Heart right ventricle (tissue), 16 donors: ENCODE measurements at regions of chr7 and their contacts with region 1.

Region 1: DNA sequence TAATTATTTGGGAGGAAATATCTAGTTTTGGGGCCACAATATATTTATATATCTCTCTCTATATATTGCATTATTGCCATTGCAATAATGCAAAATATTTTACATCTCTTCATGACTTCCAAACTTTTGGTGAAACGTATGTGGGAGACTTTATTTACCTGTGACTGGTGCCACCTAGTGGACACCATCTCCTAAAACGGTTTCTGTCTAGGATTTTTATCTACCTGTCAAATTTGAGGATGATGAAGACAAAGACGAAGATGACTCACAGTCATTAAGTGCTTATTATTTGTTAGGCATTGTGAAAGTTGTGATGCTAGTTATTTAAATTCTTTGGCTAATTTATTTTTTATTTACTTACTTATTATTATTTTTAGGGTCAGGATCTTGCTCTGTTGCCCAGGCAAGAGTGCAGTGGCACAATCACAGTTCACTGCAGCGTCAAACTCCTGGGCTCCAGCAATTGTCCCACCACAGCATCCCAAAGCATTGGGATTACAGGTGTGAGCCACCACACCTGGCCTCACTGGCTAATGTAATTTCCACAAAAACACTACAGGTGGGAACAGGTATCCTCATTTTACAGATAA is 18.7 kb upstream of the CBLL1 start:
- DNase-seq: peak in 1 of 2 donors; percentile 42
- ATAC-seq: no peak
- H3K4me3 ChIP-seq: no peak overlapping the region
- H3K27ac ChIP-seq: no peak overlapping the region
- H3K4me1 ChIP-seq: no peaks in the 10 kb centered on the region
- H3K27me3 ChIP-seq: peaks cover 0 to 9% (median 0%) of the 10 kb centered on the region in 7 donors
- CTCF ChIP-seq: peak; percentile 57 to 83 (median 74)

Region 2: DNA sequence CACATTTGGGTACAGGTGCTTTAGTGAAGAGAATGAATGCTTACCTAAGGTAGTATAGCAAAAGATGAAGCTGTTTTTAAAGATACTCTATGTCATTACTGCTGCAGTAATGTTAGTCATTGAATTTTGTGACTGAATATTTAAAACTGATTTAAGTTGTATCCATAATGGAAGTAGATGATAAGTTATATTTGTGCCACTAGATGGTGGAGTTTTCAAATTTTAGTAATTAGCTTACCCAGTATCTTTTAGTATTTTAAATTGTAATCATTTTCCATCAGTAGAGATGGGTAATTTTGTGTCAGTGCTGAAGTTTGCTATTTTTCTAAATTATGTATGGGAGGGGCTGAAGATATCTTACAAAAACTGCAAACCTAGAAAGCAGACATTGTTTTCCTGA is 531.2 kb before region 1 on chr7:
- intact Hi-C with region 1: loop called in 2 of 10 experiments (anchors 5 to 10 kb)
- DNase-seq: no peak
- ATAC-seq: no peak
- H3K4me3 ChIP-seq: no peak overlapping the region
- H3K27ac ChIP-seq: peak overlapping the region in 4 of 10 donors; percentile 11 to 42 (median 14)
- H3K4me1 ChIP-seq: peaks cover 0 to 16% (median 9%) of the 10 kb centered on the region in 9 donors
- H3K27me3 ChIP-seq: no peaks in the 10 kb centered on the region
- CTCF ChIP-seq: peak in 4 of 9 donors; percentile 15 to 20 (median 19)

Region 3: DNA sequence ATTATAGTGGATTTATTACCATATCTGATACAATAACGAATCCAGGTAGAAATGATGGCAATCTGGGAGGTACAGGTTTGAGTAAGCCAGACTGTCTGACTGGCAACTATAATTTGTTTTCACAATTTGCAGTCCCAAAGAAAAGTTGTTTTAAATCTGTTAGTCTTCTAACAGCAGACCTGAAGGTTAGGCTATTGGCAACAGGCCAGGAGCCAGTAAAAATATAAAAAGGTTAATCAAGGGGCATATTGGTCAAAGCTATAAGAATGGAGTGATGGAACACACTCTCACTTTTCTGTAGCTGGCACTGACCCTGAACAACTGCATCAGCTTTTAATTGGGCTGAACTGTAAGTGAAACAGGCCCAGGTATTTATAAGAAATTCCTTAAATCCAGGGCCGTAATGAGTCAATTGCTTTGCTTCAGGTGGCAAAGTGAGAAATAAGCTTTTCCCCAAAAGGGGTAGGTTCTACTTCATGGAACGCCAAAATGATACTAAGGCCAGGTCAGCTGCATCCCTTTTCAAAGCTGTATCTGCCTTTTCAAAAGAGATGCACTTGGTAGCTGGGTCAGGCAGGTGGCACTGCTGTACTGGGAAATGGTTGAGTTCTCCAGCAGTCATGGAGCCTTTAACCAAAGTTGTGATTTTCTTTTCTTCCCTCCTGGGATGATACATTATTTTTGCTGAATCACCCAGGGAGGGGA is 262.4 kb before region 1 on chr7:
- intact Hi-C with region 1: loop called (anchors 1 to 5 kb)
- DNase-seq: peak; percentile 46 to 61
- ATAC-seq: peak; percentile 75 to 96 (median 90)
- H3K4me3 ChIP-seq: no peak overlapping the region
- H3K27ac ChIP-seq: peak overlapping the region in 7 of 10 donors; percentile 8 to 65 (median 51)
- H3K4me1 ChIP-seq: peaks cover 0 to 39% (median 5%) of the 10 kb centered on the region in 9 donors
- H3K27me3 ChIP-seq: no peaks in the 10 kb centered on the region
- CTCF ChIP-seq: peak; percentile 54 to 91 (median 73)

Region 4: GRCh38 chr7:107471292-107472070 is 253.8 kb before region 1 on chr7:
- intact Hi-C with region 1: loop called in 1 of 10 experiments (anchors 5 kb)
- DNase-seq: no peak
- ATAC-seq: peak in 3 of 8 donors; percentile 58 to 70 (median 62)
- H3K4me3 ChIP-seq: peak overlapping the region; percentile 5 to 49 (median 34)
- H3K27ac ChIP-seq: peak overlapping the region; percentile 46 to 86 (median 78)
- H3K4me1 ChIP-seq: peaks cover 0 to 17% (median 0%) of the 10 kb centered on the region in 9 donors
- H3K27me3 ChIP-seq: no peaks in the 10 kb centered on the region
- CTCF ChIP-seq: peak in 3 of 9 donors; percentile 33 to 40 (median 37)

Region 5: GRCh38 chr7:107563775-107564552 is 161.3 kb before region 1 on chr7 and contains the starts of genes COG5 and DUS4L:
- intact Hi-C with region 1: loop called in 1 of 10 experiments (anchors 5 kb)
- DNase-seq: peak; percentile 85 to 86
- ATAC-seq: peak; percentile 94 to 98 (median 96)
- H3K4me3 ChIP-seq: peak within 1 kb of the TSS; percentile 68 to 99 (median 87)
- H3K27ac ChIP-seq: peak within 1 kb of the TSS; percentile 88 to 98 (median 94)
- H3K4me1 ChIP-seq: peaks cover 0 to 57% (median 49%) of the 10 kb centered on the region in 9 donors
- H3K27me3 ChIP-seq: no peaks in the 10 kb centered on the region
- CTCF ChIP-seq: peak in 1 of 9 donors; percentile 3
- total RNA-seq, gene COG5: 44.2 to 65.8 (median 53.0) TPM
- total RNA-seq, gene DUS4L: 6.6 to 10.6 (median 9.0) TPM

Region 6: GRCh38 chr7:107614425-107614824 is 110.8 kb before region 1 on chr7:
- intact Hi-C with region 1: loop called in 1 of 10 experiments (anchors 10 kb)
- DNase-seq: no peak
- ATAC-seq: no peak
- H3K4me3 ChIP-seq: no peak overlapping the region
- H3K27ac ChIP-seq: peak overlapping the region in 1 of 10 donors; percentile 37
- H3K4me1 ChIP-seq: peaks cover 0 to 29% (median 12%) of the 10 kb centered on the region in 9 donors
- H3K27me3 ChIP-seq: no peaks in the 10 kb centered on the region
- CTCF ChIP-seq: no peak

Region 7: DNA sequence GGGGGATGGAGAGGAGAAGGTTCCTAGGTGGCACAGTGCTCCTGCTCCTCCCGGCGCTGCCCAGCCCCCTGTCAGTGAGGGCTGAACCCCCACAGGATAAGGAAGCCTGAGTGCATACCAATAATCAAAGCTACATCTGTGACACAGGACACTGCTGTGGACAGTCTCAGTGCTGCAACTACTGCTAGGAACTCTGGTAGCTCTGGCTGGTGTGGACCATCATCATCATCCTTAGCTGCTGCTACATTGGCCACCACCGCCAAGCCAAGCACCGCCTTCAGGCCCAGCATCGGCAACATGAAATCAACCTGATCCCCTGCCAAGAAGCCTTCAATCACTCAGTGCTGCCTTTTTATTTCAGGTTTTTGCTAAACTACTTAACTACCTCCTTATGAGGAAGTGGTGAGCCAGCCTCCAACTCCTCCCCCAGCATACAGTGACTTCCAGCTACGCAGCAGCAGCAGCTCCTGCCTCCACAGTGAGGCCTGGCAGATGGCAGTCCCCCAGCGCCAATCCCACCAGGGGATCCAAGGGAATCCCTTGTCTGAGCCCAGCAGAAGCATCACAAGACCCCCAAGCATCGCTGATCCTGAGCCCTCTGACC is 96.7 kb before region 1 on chr7:
- intact Hi-C with region 1: no loop called
- DNase-seq: no peak
- ATAC-seq: peak in 1 of 8 donors; percentile 12
- H3K4me3 ChIP-seq: no peak overlapping the region
- H3K27ac ChIP-seq: no peak overlapping the region
- H3K4me1 ChIP-seq: no peaks in the 10 kb centered on the region
- H3K27me3 ChIP-seq: no peaks in the 10 kb centered on the region
- CTCF ChIP-seq: no peak